GM12878 (cell line): ENCODE measurements at regions of chr12 and their contacts with region 1.

Region 1: GRCh38 chr12:120086801-120087621 is 29.5 kb downstream of the RAB35 start:
- DNase-seq: peak; percentile 98
- ATAC-seq: peak; percentile 98
- H3K4me3 ChIP-seq: peak overlapping the region; percentile 55; the same call in 1 of the 2 replicates
- H3K27ac ChIP-seq: peak overlapping the region; percentile 65
- H3K4me1 ChIP-seq: peaks cover 12% of the 10 kb centered on the region
- H3K27me3 ChIP-seq: no peaks in the 10 kb centered on the region
- CTCF ChIP-seq: peak; percentile 98
- EP300 ChIP-seq: peak in 1 of 2 experiments; percentile 56; a peak in 1 of 4 replicates
- POLR2A ChIP-seq: peak; percentile 75
- RAD21 ChIP-seq: peak; percentile 81

Region 2: GRCh38 chr12:119911182-119911581 is 175.8 kb before region 1 on chr12:
- CTCF ChIA-PET with region 1: no interaction called
- POLR2A ChIA-PET with region 1: no interaction called
- RAD21 ChIA-PET with region 1: no interaction called
- SMC1A ChIA-PET with region 1: no interaction called
- in situ Hi-C with region 1: no loop called
- intact Hi-C with region 1: no loop called
- DNase-seq: no peak
- ATAC-seq: no peak
- H3K4me3 ChIP-seq: no peak overlapping the region
- H3K27ac ChIP-seq: no peak overlapping the region
- H3K4me1 ChIP-seq: no peaks in the 10 kb centered on the region
- H3K27me3 ChIP-seq: no peaks in the 10 kb centered on the region
- CTCF ChIP-seq: no peak
- EP300 ChIP-seq: no peak
- POLR2A ChIP-seq: no peak
- RAD21 ChIP-seq: no peak

Region 3: DNA sequence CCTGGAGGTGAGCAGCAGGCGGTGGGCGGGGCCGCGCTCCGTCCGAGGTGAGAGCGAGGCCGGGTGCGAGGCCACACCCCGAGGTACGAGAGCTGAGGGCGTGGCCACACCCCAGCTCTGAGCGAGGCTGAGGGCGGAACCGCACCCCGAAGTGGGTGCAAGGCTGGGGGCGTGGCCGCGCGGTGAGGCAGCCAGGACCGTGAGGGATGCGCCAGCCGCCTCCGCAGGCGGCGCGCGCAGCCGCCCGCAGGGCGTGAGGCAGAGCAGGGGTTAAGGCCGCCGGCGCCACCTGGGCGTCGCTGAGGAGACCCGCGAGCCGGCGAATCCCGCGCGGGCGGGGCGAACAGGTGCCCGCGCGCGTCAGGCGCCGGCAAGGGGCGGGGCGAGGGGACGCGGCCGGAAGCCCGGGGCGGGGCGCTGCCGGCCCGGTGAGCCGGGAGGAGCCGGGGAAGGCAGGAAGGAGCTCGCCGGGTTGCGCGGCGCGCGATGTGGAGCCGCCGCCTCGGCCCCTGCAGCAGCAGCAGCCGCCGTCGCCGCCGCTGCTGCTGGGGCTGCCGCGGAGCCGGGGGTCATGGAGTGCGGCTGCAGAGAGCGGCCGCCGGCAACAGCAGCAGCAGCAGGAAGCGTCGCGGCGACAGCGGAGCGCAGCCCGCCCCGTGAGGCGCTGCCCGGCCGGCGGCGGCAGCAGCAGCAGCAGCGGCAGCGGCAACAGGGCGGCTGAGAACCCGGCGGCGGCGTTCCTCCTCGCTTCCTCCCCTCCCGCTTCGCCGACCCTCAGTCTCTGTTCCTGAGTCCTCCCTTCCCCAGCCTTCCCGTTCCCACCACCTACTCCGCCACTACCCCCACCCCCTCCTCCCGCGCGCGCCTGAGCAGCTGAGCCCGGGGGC is 98.0 kb before region 1 on chr12 and contains the start of gene BICDL1:
- CTCF ChIA-PET with region 1: interaction called, 18 read pairs
- POLR2A ChIA-PET with region 1: interaction called, 7 read pairs
- RAD21 ChIA-PET with region 1: interaction called, 25 read pairs
- SMC1A ChIA-PET with region 1: interaction called, 8 read pairs
- in situ Hi-C with region 1: no loop called
- intact Hi-C with region 1: loop called (anchors 2 kb)
- DNase-seq: peak; percentile 69
- ATAC-seq: peak; percentile 91
- H3K4me3 ChIP-seq: peak within 1 kb of the TSS; percentile 82
- H3K27ac ChIP-seq: no peak within 1 kb of the TSS
- H3K4me1 ChIP-seq: peaks cover 6% of the 10 kb centered on the region
- H3K27me3 ChIP-seq: no peaks in the 10 kb centered on the region
- CTCF ChIP-seq: peak in 1 of 3 experiments; percentile 16; a peak in 1 of 6 replicates
- EP300 ChIP-seq: no peak
- POLR2A ChIP-seq: peak; percentile 60
- RAD21 ChIP-seq: no peak
- polyA plus RNA-seq, gene BICDL1: 0.72 to 1.2 TPM

Region 4: DNA sequence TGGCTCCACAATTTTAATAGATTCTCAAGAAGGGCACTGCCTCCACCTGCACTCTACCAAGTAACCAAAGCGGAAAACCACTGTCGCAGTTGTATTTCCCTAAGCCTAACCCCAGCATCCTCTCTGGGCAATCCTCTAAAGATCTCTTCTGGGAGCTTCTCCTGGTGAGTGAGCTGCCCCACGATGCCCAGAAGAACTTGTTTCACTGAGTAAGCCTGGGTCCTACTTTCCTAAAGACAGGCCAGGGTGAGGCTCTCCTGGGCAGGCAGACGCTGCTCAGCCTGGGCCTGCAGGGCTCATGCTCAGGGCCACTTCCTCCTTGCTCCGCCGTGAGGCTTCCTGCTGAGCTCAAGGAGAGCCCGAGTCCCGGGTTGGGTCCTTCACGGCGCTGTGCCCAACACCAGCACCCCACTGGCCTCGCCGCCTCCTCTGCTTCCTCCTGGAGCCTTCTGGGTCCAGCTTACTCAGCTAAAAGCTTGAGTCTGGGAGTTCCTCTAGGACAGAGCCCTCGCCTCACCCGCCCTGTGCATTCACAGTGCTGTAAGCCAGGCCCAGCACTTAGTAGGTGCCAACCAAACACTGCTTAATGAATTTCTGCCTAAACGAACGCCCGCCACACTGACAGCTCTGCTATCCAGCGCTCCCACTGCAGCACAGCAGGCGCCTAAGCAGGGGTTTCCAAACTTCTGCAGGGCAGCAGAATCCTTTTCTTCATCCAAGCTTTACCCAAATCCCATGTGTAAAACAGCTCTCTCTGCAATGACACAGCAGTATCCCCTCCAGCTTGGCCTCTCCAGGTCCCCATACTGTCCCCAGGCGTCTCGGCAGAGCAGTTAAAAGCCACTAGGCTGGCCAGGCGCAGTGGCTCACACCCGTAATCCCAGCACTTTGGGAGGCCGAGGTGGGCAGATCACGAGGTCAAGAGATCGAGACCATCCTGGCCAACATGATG is 23.8 kb after region 1 on chr12:
- CTCF ChIA-PET with region 1: interaction called, 9 read pairs
- POLR2A ChIA-PET with region 1: interaction called, 5 read pairs
- RAD21 ChIA-PET with region 1: interaction called, 37 read pairs
- SMC1A ChIA-PET with region 1: interaction called, 14 read pairs
- in situ Hi-C with region 1: no loop called
- intact Hi-C with region 1: loop called (anchors 2 kb)
- DNase-seq: no peak
- ATAC-seq: peak; percentile 92
- H3K4me3 ChIP-seq: peak overlapping the region; percentile 62
- H3K27ac ChIP-seq: peak overlapping the region; percentile 56
- H3K4me1 ChIP-seq: peaks cover 49% of the 10 kb centered on the region
- H3K27me3 ChIP-seq: no peaks in the 10 kb centered on the region
- CTCF ChIP-seq: 0 out of 6 replicates have a peak, but pooled peaks have one; percentile 4 to 12 (median 8)
- EP300 ChIP-seq: no peak
- POLR2A ChIP-seq: peak; percentile 3
- RAD21 ChIP-seq: 0 out of 2 replicates have a peak, but pooled peaks have one; percentile 10

Region 5: GRCh38 chr12:120142231-120142877 is 55.3 kb after region 1 on chr12:
- CTCF ChIA-PET with region 1: no interaction called
- POLR2A ChIA-PET with region 1: no interaction called
- RAD21 ChIA-PET with region 1: no interaction called
- SMC1A ChIA-PET with region 1: no interaction called
- in situ Hi-C with region 1: no loop called
- intact Hi-C with region 1: no loop called
- DNase-seq: no peak
- ATAC-seq: no peak
- H3K4me3 ChIP-seq: no peak overlapping the region
- H3K27ac ChIP-seq: no peak overlapping the region
- H3K4me1 ChIP-seq: no peaks in the 10 kb centered on the region
- H3K27me3 ChIP-seq: no peaks in the 10 kb centered on the region
- CTCF ChIP-seq: no peak
- EP300 ChIP-seq: no peak
- POLR2A ChIP-seq: 0 out of 2 replicates have a peak, but pooled peaks have one; percentile 22
- RAD21 ChIP-seq: no peak

Region 6: DNA sequence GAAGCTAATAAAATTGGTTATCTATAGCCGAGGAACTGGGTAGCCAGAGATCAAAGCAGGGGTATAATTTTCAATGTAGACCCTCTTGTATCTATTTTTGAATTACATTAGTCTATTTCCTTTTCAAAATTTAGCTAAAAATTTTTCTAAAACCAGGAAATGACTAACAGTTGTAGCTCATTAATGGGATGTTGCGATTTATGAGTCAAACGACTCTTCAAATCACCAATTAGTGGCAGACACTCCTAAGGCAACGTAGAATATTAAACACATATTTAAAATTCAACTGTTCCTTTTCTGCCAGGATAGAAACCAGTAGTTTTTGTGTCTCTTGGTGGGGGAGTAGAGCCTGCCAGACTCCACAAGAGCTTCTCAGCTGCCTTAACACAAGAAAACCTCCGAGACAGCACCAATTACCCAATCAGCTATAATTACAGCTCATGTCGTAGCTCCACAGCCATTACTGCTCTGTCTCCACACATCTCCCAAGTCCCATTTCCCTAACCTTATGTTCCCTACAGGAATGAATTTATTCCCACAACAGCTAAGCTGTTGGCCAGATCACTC is 80.6 kb after region 1 on chr12:
- CTCF ChIA-PET with region 1: no interaction called
- POLR2A ChIA-PET with region 1: no interaction called
- RAD21 ChIA-PET with region 1: interaction called, 14 read pairs
- SMC1A ChIA-PET with region 1: no interaction called
- in situ Hi-C with region 1: no loop called
- intact Hi-C with region 1: no loop called
- DNase-seq: no peak
- ATAC-seq: peak; percentile 46
- H3K4me3 ChIP-seq: no peak overlapping the region
- H3K27ac ChIP-seq: peak overlapping the region; percentile 76
- H3K4me1 ChIP-seq: peaks cover 19% of the 10 kb centered on the region
- H3K27me3 ChIP-seq: no peaks in the 10 kb centered on the region
- CTCF ChIP-seq: no peak
- EP300 ChIP-seq: no peak
- POLR2A ChIP-seq: no peak
- RAD21 ChIP-seq: no peak

Region 7: DNA sequence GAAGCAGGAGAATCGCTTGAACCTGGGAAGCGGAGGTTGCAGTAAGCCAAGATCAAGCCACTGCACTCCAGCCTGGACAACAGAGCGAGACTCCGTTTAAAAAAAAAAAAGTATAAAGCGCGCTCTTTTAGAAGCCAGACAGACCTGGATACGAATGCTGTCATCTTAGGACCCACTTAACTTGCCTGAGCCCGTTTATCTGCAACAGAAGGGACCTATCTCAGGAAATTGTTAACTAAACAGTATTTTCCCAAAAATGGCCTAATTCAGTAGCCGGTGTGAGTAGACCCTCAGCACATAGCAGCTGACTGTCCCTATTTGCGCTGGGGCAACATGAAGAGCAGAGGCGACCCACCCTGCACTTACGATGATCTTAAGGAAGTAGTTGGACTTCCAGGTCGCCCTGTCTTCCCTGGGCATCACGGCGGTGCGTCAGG is 113.4 kb after region 1 on chr12:
- CTCF ChIA-PET with region 1: interaction called, 22 read pairs
- POLR2A ChIA-PET with region 1: interaction called, 10 read pairs
- RAD21 ChIA-PET with region 1: interaction called, 23 read pairs
- SMC1A ChIA-PET with region 1: interaction called, 9 read pairs
- in situ Hi-C with region 1: no loop called
- intact Hi-C with region 1: no loop called
- DNase-seq: no peak
- ATAC-seq: no peak
- H3K4me3 ChIP-seq: peak overlapping the region; percentile 92
- H3K27ac ChIP-seq: peak overlapping the region; percentile 87
- H3K4me1 ChIP-seq: peaks cover 17% of the 10 kb centered on the region
- H3K27me3 ChIP-seq: no peaks in the 10 kb centered on the region
- CTCF ChIP-seq: no peak
- EP300 ChIP-seq: no peak
- POLR2A ChIP-seq: no peak
- RAD21 ChIP-seq: no peak